Sciatic nerve (tissue), 2 donors: ENCODE measurements at regions of chr10 and their contacts with region 1.

Region 1: GRCh38 chr10:31928549-31929260 is at the start of gene ARHGAP12:
- DNase-seq: peak; percentile 95
- ATAC-seq: peak; percentile 96
- total RNA-seq, gene ARHGAP12: 57.0 TPM

Region 2: GRCh38 chr10:31171402-31172083 is 757.2 kb before region 1 on chr10:
- intact Hi-C with region 1: no loop called
- DNase-seq: no peak
- ATAC-seq: no peak

Region 3: GRCh38 chr10:31864834-31865518 is 63.7 kb before region 1 on chr10:
- intact Hi-C with region 1: loop called (anchors 10 kb)
- DNase-seq: no peak
- ATAC-seq: no peak